ENCODE measurements at regions of chr7 and their contacts with region 1.

Region 1: GRCh38 chr7:123635551-123636359 is 19.9 kb upstream of the LMOD2 start:
- DNase-seq: no peak
- ATAC-seq: peak; percentile 76
- H3K4me3 Mint-ChIP-seq: no peak overlapping the region
- H3K27ac Mint-ChIP-seq: no peak overlapping the region
- H3K4me1 Mint-ChIP-seq: peaks cover 10% of the 10 kb centered on the region
- H3K27me3 Mint-ChIP-seq: no peaks in the 10 kb centered on the region
- CTCF ChIP-seq: no peak

Region 2: DNA sequence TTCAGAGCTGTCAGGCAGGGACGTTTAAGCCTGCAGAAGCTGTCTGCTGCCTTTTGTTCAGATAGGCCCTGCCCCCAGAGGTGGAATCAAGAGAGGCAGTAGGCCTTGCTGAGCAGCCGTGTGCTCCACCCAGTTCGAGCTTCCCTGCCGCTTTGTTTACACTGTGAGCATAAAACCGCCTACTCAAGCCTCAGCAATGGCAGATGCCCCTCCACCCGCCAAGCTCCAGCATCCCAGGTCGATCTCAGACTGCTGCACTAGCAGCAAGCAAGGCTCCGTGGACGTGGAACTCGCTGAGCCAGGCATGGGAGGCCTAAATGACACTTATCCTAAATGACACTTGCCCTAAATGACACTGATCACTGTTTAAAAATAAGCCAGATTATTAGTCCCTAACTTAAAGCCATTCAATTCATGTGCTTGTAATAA is 40.9 kb before region 1 on chr7:
- CTCF ChIA-PET with region 1: no interaction called
- POLR2A ChIA-PET with region 1: no interaction called
- DNase-seq: peak; percentile 67
- ATAC-seq: peak; percentile 92
- H3K4me3 Mint-ChIP-seq: peak overlapping the region; percentile 32
- H3K27ac Mint-ChIP-seq: 0 out of 2 replicates have a peak overlapping the region, but pooled peaks have one; percentile 66
- H3K4me1 Mint-ChIP-seq: peaks cover 15% of the 10 kb centered on the region
- H3K27me3 Mint-ChIP-seq: no peaks in the 10 kb centered on the region; the same call in none of the 2 replicates
- CTCF ChIP-seq: no peak

Region 3: DNA sequence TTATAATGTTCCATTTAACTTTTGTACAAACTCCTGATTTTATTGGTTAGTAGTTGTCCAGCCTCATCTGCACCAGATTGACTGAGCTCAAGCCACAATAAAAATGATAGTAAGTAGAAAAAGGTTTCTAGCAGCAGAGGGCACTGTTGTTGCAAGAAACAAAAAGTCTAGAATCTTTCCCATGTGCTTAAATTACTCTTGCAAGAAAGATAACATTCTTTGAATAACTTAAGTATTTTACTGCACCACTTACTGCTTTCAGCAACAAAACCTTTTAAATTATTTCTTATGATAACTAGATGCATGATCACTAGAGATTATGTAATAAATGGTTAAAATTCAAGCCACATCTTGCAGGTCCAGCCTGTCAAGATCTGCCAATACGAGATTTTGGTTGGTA is 46.9 kb after region 1 on chr7:
- CTCF ChIA-PET with region 1: interaction called, 35 read pairs
- POLR2A ChIA-PET with region 1: no interaction called
- DNase-seq: no peak
- ATAC-seq: peak; percentile 66
- H3K4me3 Mint-ChIP-seq: no peak overlapping the region
- H3K27ac Mint-ChIP-seq: no peak overlapping the region
- H3K4me1 Mint-ChIP-seq: peaks cover 6% of the 10 kb centered on the region; the same call in 1 of the 2 replicates
- H3K27me3 Mint-ChIP-seq: no peaks in the 10 kb centered on the region
- CTCF ChIP-seq: 0 out of 2 replicates have a peak, but pooled peaks have one; percentile 28

Region 4: GRCh38 chr7:123705211-123705901 is 69.6 kb after region 1 on chr7:
- CTCF ChIA-PET with region 1: interaction called, 38 read pairs
- POLR2A ChIA-PET with region 1: no interaction called
- DNase-seq: no peak
- ATAC-seq: no peak
- H3K4me3 Mint-ChIP-seq: no peak overlapping the region
- H3K27ac Mint-ChIP-seq: no peak overlapping the region; the same call in 1 of the 2 replicates
- H3K4me1 Mint-ChIP-seq: peaks cover 2% of the 10 kb centered on the region
- H3K27me3 Mint-ChIP-seq: no peaks in the 10 kb centered on the region
- CTCF ChIP-seq: no peak

Region 5: GRCh38 chr7:123865517-123866117 is 229.9 kb after region 1 on chr7:
- CTCF ChIA-PET with region 1: interaction called, 35 read pairs
- POLR2A ChIA-PET with region 1: no interaction called
- DNase-seq: peak; percentile 42
- ATAC-seq: peak; percentile 95
- H3K4me3 Mint-ChIP-seq: no peak overlapping the region
- H3K27ac Mint-ChIP-seq: 0 out of 2 replicates have a peak overlapping the region, but pooled peaks have one; percentile 15
- H3K4me1 Mint-ChIP-seq: peaks cover 19% of the 10 kb centered on the region
- H3K27me3 Mint-ChIP-seq: no peaks in the 10 kb centered on the region
- CTCF ChIP-seq: peak; percentile 63

Region 6: GRCh38 chr7:123871998-123872867 is 236.5 kb after region 1 on chr7:
- CTCF ChIA-PET with region 1: interaction called, 35 read pairs
- POLR2A ChIA-PET with region 1: no interaction called
- DNase-seq: peak; percentile 55
- ATAC-seq: peak; percentile 99
- H3K4me3 Mint-ChIP-seq: no peak overlapping the region
- H3K27ac Mint-ChIP-seq: no peak overlapping the region
- H3K4me1 Mint-ChIP-seq: peaks cover 9% of the 10 kb centered on the region; the same call in 1 of the 2 replicates
- H3K27me3 Mint-ChIP-seq: no peaks in the 10 kb centered on the region
- CTCF ChIP-seq: no peak

Region 7: GRCh38 chr7:123994449-123994848 is 358.7 kb after region 1 on chr7:
- CTCF ChIA-PET with region 1: no interaction called
- POLR2A ChIA-PET with region 1: no interaction called
- DNase-seq: no peak
- ATAC-seq: peak; percentile 77
- H3K4me3 Mint-ChIP-seq: no peak overlapping the region
- H3K27ac Mint-ChIP-seq: no peak overlapping the region; the same call in 1 of the 2 replicates
- H3K4me1 Mint-ChIP-seq: peaks cover 24% of the 10 kb centered on the region
- H3K27me3 Mint-ChIP-seq: no peaks in the 10 kb centered on the region
- CTCF ChIP-seq: no peak

Measured in WTC11 (cell line).